ENCODE measurements at regions of chr1 and their contacts with region 1.

Region 1: DNA sequence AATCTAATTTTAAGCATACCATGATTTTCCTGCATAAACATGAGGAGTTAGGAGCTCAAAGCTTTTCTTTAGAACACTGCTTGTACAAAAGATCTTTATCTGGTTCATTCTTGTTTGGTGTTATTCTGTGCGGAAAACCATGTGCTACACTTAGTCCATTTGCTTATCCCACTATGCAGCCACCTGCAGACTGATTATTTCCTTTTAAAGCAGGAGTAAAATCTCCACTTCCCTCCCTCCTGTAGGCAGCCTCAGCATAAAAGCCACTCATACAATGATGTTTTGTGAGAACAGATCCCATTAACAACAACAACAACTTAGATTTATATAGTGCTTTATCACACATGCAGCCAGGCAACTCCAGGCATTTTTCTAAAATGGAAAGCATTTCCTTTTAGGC is 355.3 kb upstream of the NEGR1 start:
- DNase-seq: no peak
- ATAC-seq: no peak
- H3K4me3 Mint-ChIP-seq: no peak overlapping the region; the same call in 1 of the 2 replicates
- H3K27ac Mint-ChIP-seq: peak overlapping the region; percentile 20; the same call in 1 of the 2 replicates
- H3K4me1 Mint-ChIP-seq: peaks cover 43% of the 10 kb centered on the region
- H3K27me3 Mint-ChIP-seq: no peaks in the 10 kb centered on the region
- CTCF ChIP-seq: no peak

Region 2: DNA sequence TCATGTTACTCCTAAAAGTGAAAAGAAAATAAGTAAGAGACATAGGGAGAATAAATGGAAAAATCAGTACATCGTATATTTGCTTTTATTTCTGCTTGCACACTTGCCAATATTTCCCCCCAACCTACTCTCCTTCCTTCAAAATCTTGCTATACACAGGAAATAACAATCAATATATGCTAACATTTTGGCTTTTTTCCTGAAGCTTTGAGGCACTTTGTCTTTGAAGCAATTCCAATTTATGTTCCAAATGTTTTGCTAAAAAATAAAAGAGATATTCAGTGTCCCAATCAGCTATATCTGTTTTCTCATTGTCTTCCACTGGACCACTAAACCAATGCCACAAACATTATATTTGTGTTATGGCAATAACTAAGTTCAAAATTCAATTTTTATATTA is 171.2 kb before region 1 on chr1:
- CTCF ChIA-PET with region 1: no interaction called
- POLR2A ChIA-PET with region 1: no interaction called
- DNase-seq: no peak
- ATAC-seq: no peak
- H3K4me3 Mint-ChIP-seq: no peak overlapping the region
- H3K27ac Mint-ChIP-seq: no peak overlapping the region
- H3K4me1 Mint-ChIP-seq: no peaks in the 10 kb centered on the region
- H3K27me3 Mint-ChIP-seq: no peaks in the 10 kb centered on the region
- CTCF ChIP-seq: no peak

Region 3: GRCh38 chr1:72547412-72547811 is 90.2 kb before region 1 on chr1:
- CTCF ChIA-PET with region 1: no interaction called
- POLR2A ChIA-PET with region 1: no interaction called
- DNase-seq: no peak
- ATAC-seq: peak; percentile 79
- H3K4me3 Mint-ChIP-seq: no peak overlapping the region
- H3K27ac Mint-ChIP-seq: no peak overlapping the region
- H3K4me1 Mint-ChIP-seq: peaks cover 21% of the 10 kb centered on the region
- H3K27me3 Mint-ChIP-seq: 0 out of 2 replicates have a peak, but pooled peaks cover 6% of the 10 kb centered on the region
- CTCF ChIP-seq: no peak

Region 4: GRCh38 chr1:72623299-72623708 is 14.3 kb before region 1 on chr1:
- CTCF ChIA-PET with region 1: interaction called, 10 read pairs
- POLR2A ChIA-PET with region 1: no interaction called
- DNase-seq: no peak
- ATAC-seq: peak; percentile 90
- H3K4me3 Mint-ChIP-seq: no peak overlapping the region
- H3K27ac Mint-ChIP-seq: no peak overlapping the region
- H3K4me1 Mint-ChIP-seq: no peaks in the 10 kb centered on the region
- H3K27me3 Mint-ChIP-seq: no peaks in the 10 kb centered on the region
- CTCF ChIP-seq: peak; percentile 39